Activated CD8-positive, alpha-beta T cell treated with anti-CD3 and anti-CD28 coated beads for 36 hours (primary cell): ENCODE measurements at regions of chr2 and their contacts with region 1.

Region 1: DNA sequence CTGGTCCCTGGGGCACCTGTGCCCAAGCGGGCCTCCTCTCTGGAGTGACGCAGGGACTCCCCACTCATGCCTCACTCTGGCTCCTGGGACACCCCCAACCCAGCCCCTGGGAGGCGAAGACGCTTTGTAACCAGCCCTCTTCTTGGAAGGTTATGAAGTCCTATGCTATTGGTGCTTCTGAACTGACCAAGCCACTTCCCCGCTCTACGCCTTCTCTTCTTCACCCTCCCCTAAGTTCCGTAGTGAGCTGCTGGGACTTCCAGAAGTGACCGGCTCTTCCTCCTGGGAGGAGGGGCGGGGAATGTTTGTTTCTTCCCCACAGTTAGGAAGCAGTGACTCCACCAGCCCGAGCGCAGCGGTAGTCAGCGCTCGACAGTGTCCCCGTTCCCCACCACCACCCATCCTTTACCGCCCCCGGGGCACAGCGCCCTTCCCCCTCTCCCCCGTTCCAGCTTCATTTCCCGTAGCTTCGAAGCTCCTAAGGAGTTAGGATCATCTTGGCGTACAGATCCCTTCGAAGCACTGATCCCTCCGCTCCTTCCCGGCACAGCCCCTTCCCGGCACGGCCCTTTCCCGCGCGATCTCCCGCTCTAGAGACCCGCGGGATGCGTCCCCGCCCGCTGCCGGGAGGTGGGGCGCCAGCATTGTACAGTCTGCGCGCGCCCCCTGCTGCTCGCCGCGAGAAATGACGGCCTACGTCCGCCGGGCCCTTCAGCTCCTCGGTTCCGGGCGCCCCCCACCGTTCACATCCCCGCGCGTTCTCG is 25.3 kb upstream of the NOTO start:
- DNase-seq: peak; percentile 95
- ATAC-seq: peak; percentile 82
- H3K4me3 Mint-ChIP-seq: peak overlapping the region; percentile 79
- H3K27ac Mint-ChIP-seq: peak overlapping the region; percentile 71
- H3K4me1 Mint-ChIP-seq: peaks cover 26% of the 10 kb centered on the region
- H3K27me3 Mint-ChIP-seq: peaks cover 28% of the 10 kb centered on the region
- CTCF ChIP-seq: peak; percentile 99

Region 2: GRCh38 chr2:72649810-72650209 is 527.3 kb before region 1 on chr2:
- CTCF ChIA-PET with region 1: no interaction called
- POLR2A ChIA-PET with region 1: no interaction called
- intact Hi-C with region 1: no loop called
- DNase-seq: no peak
- ATAC-seq: no peak
- H3K4me3 Mint-ChIP-seq: no peak overlapping the region
- H3K27ac Mint-ChIP-seq: no peak overlapping the region
- H3K4me1 Mint-ChIP-seq: no peaks in the 10 kb centered on the region
- H3K27me3 Mint-ChIP-seq: no peaks in the 10 kb centered on the region
- CTCF ChIP-seq: no peak

Region 3: DNA sequence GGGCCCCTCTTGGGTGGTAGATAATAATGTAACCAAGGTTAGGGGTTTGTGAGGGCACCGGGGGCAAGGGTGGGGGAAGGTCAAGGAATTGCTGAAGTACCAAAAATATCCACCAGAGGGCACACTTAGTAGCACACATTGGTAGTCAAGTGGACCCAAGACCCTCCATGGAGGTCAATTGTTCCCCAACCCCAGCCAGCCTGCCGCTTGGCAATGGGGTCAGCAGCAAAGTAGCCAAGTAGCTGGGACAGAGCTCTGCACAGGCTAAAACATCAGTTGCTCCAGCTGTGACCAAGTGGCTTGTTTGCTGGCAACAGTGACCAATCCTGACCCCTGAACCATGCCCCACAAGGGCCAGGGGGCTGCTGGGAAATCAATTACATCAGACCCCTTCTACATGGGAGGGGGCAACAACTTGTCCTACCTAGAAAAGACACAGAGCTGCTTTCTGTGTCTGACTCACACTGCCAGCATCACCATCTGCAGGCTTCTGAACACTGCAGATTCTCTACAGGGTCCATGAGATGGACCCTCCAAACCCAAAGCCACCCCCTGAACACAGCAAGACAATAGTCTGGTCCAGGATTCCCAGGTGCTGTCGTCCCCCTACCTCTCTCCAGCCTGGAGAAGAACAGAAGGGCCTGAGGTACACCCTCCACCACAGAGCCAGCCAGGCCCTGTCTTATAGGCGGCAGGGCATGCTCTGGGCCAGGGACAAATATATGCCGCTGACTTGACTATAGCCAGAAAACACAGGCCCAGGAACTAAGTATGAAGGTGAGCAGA is 183.7 kb before region 1 on chr2:
- CTCF ChIA-PET with region 1: interaction called, 60 read pairs
- POLR2A ChIA-PET with region 1: no interaction called
- intact Hi-C with region 1: loop called (anchors 2 kb)
- DNase-seq: peak; percentile 51
- ATAC-seq: peak; percentile 79
- H3K4me3 Mint-ChIP-seq: no peak overlapping the region
- H3K27ac Mint-ChIP-seq: no peak overlapping the region
- H3K4me1 Mint-ChIP-seq: no peaks in the 10 kb centered on the region
- H3K27me3 Mint-ChIP-seq: no peaks in the 10 kb centered on the region
- CTCF ChIP-seq: peak; percentile 81

Region 4: DNA sequence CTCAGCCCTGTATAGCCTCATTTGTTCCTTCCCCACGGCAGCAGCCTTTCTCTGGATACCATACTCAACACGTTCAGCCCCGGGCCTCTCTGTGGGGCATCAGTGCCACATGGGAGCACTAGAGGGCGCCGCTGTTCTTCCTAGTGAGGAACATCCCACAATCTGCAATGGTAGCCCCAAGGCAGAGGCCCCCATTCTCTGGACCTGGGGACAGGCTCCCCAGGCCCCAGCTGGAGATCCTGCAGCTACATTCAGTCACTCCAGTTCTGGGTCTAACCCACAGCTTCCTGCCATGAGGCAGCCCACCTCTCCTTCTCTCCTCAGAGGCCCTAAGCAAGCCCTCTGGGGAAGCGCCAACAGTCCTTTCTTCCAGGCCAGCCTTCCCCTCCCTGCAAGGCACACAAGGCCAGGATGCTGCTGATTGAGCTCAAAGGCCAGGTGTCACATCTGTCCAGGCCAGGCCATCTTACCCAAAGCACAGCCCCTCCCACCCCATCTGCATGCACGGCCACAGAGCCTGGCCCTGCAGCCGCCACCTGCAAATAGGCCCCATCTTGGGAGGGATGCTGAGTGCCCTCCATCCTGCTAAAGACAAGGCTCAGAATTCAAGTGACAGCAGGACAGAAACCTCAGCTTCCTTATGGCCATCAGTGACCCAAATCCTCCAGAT is 91.2 kb before region 1 on chr2:
- CTCF ChIA-PET with region 1: interaction called, 67 read pairs
- POLR2A ChIA-PET with region 1: interaction called, 3 read pairs
- intact Hi-C with region 1: no loop called
- DNase-seq: peak; percentile 93
- ATAC-seq: peak; percentile 99
- H3K4me3 Mint-ChIP-seq: no peak overlapping the region
- H3K27ac Mint-ChIP-seq: no peak overlapping the region
- H3K4me1 Mint-ChIP-seq: no peaks in the 10 kb centered on the region
- H3K27me3 Mint-ChIP-seq: no peaks in the 10 kb centered on the region
- CTCF ChIP-seq: peak; percentile 92

Region 5: GRCh38 chr2:73156539-73157124 is 20.4 kb before region 1 on chr2:
- CTCF ChIA-PET with region 1: interaction called, 14 read pairs
- POLR2A ChIA-PET with region 1: no interaction called
- intact Hi-C with region 1: no loop called
- DNase-seq: peak; percentile 68
- ATAC-seq: peak; percentile 91
- H3K4me3 Mint-ChIP-seq: no peak overlapping the region
- H3K27ac Mint-ChIP-seq: no peak overlapping the region
- H3K4me1 Mint-ChIP-seq: no peaks in the 10 kb centered on the region
- H3K27me3 Mint-ChIP-seq: peaks cover 24% of the 10 kb centered on the region
- CTCF ChIP-seq: peak; percentile 74

Region 6: DNA sequence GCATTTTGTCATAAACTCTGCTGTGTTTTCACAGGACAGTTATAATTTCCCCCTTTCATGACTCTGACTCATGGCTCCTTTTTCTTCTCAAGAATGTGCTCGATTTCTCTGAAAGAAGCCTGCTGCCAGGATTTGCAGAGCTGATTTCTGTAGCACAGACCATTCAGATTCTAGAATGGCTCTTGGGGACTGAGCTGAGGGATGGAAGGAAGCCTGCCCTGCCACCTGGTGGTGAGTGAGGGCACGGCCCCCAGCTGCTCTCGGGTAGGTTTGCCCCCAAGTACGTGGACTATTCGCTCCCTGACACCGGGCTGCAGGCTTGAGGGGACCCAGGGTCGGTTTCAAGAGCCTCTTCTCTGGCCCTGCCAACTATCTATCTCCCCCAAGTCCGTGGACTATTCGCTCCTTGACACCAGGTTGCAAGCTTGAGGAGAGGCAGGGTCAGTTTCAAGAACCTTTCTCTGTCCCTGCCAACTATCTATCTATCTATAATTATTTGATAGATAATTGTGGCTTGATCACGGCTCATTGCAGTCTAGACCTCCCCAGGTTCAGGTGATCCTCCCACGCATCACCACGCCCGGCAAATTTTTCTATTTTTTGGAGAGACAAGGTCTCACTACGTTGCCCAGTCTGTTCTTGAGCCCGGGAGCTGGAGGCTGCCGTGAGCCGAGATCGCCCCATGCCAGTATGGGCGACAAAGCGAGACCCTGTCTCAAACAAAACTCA is 35.5 kb after region 1 on chr2:
- CTCF ChIA-PET with region 1: interaction called, 79 read pairs
- POLR2A ChIA-PET with region 1: interaction called, 9 read pairs
- intact Hi-C with region 1: no loop called
- DNase-seq: peak; percentile 89
- ATAC-seq: peak; percentile 78
- H3K4me3 Mint-ChIP-seq: peak overlapping the region; percentile 33
- H3K27ac Mint-ChIP-seq: no peak overlapping the region
- H3K4me1 Mint-ChIP-seq: peaks cover 29% of the 10 kb centered on the region
- H3K27me3 Mint-ChIP-seq: no peaks in the 10 kb centered on the region
- CTCF ChIP-seq: peak; percentile 90

Region 7: DNA sequence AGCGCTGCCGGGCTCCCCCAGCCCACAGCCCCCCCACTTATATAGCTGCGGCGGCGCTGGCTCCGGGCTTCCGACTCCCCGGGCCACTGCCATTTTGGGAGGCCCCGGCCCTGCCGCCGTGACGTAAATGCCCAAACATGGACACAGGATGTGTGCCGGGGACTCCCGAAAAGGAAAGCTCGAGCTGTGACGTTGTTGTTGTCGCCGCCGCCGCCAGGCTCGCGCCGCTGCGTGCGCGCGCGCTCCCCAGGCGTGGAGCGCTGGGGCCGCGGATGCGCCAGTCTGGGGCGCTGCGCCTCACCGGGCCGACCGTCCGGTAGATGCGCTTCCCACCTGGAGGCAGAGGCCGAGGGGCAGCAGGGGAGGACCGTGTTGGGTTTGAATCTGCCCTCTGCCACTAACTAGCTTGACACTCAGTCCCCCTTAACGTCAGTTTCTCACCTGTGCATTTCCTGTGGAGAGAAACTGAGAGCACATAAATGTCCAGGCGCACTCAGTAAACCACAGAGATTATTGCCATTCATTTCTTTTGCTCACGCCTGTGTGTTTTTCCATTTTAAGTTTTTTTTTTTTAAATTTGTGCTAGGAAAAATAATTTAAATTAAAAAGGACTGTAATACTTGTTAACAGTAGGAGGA is 116.6 kb after region 1 on chr2 and contains the start of gene EGR4:
- CTCF ChIA-PET with region 1: interaction called, 11 read pairs
- POLR2A ChIA-PET with region 1: no interaction called
- intact Hi-C with region 1: no loop called
- DNase-seq: peak; percentile 95
- ATAC-seq: peak; percentile 93
- H3K4me3 Mint-ChIP-seq: peak within 1 kb of the TSS; percentile 70
- H3K27ac Mint-ChIP-seq: no peak within 1 kb of the TSS
- H3K4me1 Mint-ChIP-seq: peaks cover 11% of the 10 kb centered on the region
- H3K27me3 Mint-ChIP-seq: peaks cover 63% of the 10 kb centered on the region
- CTCF ChIP-seq: no peak
- total RNA-seq, gene EGR4: 0.11 to 0.29 TPM